Dendritic cell treated with granulocyte-macrophage colony-stimulating factor and Interleukin-4, amounts not matched to agents 40 ng/mL and 50 ng/mL, for 4 days (primary cell): ENCODE measurements at regions of chr3 and their contacts with region 1.

Region 1: DNA sequence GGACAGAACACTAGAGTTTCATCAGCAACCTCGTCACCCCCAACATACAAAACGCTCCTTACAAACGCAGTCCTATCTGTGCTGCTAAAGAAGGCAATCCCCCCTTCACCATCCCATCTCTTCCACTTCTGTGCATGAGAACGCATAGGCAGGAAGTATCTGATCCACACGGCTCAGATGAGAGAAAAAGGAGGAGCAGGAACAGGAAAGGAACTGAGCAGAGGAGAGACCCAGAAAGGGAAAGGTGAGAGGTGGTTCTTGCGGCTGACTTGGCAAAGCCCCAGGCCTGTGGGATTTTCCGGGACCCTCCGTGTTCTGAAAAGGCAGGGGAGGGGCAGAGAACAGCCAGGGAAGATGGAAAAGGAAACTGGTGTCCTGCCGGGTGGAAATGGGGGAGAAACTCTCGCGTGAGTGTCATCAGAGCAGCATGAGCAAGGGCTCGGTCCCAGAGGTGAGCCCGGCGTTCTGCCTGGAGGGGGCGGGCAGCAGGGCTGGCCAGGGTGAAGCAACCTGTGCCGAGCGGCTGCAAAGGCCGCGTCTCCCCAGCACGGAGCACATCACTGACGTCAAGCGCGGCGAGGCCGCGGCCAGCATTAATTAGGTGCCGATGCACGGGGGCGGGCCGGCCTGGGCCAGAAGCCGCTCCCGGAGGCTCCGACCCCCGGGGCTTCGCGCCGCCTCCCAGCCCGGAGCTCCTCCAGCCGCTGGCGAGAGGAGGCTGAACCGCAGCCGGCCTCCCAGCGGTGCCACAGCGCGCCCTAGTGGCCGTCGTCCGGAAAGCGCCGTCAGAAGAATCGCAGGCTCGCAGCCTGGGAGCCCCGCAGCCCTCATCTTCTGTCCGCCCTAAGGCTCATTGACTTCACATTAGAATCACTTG is 35.8 kb downstream of the CPN2 start:
- H3K4me3 Mint-ChIP-seq: peak overlapping the region; percentile 74
- H3K27ac Mint-ChIP-seq: peak overlapping the region; percentile 3
- H3K4me1 Mint-ChIP-seq: peaks cover 8% of the 10 kb centered on the region
- H3K27me3 Mint-ChIP-seq: peaks cover 80% of the 10 kb centered on the region

Region 2: GRCh38 chr3:193665370-193665989 is 649.8 kb before region 1 on chr3:
- intact Hi-C with region 1: loop called (anchors 1 kb)
- H3K4me3 Mint-ChIP-seq: no peak overlapping the region
- H3K27ac Mint-ChIP-seq: no peak overlapping the region
- H3K4me1 Mint-ChIP-seq: no peaks in the 10 kb centered on the region
- H3K27me3 Mint-ChIP-seq: no peaks in the 10 kb centered on the region

Region 3: DNA sequence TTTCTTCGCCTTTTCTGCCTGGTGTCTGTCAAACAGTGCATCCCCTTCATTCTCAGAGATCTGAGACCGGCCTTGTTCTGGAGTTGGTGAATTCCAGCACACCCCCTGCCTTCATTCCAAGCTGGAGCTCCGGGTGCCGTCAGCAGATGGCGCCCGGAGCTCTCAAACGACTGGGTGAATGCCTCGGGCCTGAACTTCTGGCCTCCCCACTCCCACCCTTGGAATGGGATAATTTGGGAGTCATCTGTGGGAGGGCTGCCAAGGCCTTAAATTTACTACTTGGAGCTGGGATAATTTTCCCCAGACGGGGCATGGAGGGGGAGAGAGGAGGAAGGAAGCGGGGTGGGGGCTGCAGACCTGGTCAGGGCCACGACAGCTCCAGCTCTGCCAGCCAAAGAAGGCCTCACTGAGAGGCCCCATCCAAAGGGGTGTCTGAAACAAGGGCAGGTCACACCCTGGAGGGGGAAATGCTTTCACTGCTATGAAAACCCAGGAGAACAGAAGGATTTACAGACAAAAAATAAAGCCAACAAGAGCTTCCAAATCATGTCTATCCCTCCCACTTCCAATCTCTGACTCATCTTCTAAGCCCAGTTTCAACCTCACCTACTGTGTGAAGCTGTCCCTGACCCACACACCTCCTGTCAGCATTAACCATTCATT is 534.4 kb before region 1 on chr3:
- intact Hi-C with region 1: loop called (anchors 1 kb)
- H3K4me3 Mint-ChIP-seq: no peak overlapping the region
- H3K27ac Mint-ChIP-seq: no peak overlapping the region
- H3K4me1 Mint-ChIP-seq: no peaks in the 10 kb centered on the region
- H3K27me3 Mint-ChIP-seq: peaks cover 53% of the 10 kb centered on the region

Region 4: GRCh38 chr3:193788189-193788991 is 526.9 kb before region 1 on chr3:
- intact Hi-C with region 1: loop called (anchors 2 kb)
- H3K4me3 Mint-ChIP-seq: no peak overlapping the region
- H3K27ac Mint-ChIP-seq: no peak overlapping the region
- H3K4me1 Mint-ChIP-seq: peaks cover 5% of the 10 kb centered on the region
- H3K27me3 Mint-ChIP-seq: peaks cover 54% of the 10 kb centered on the region

Region 5: DNA sequence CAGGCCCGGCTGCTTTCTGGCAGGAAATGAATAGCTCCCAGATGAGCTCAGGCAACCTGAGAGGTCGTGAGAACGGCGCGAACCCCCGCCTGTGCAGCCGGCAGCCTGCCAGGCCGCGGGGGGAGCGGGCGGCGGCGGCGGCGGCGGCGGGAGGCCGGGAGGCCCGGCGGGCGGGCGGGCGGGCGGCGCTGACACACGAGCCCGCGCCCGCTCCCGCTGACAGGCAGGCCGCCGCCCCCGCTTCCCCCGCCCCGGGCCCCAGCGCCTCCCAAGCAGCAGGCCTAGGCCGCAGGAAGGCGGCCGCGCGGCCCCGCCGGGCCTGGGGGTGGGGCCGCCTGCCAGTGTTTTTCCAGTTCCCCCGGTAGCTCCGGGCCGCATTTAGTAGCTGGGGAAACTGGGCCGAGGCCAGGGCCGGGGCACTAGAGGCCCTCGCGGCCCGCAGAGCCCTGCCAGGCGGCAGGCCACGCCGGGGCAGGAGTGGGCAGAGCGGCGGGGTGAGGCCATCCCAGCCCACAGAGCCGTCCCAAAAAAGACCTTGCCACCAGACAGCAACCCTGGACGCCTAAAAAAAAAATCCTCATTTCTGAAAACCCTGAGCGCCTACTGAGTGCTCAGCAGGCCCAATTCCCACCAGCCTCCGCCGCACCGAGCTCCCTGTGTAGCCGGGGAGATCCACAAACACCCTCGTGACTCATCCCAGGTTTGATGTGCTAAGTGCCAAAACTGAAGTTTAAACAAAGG is 173.7 kb before region 1 on chr3:
- intact Hi-C with region 1: loop called (anchors 10 kb)
- H3K4me3 Mint-ChIP-seq: peak overlapping the region; percentile 57
- H3K27ac Mint-ChIP-seq: no peak overlapping the region
- H3K4me1 Mint-ChIP-seq: peaks cover 24% of the 10 kb centered on the region
- H3K27me3 Mint-ChIP-seq: peaks cover 80% of the 10 kb centered on the region

Region 6: GRCh38 chr3:194265483-194265892 is 49.8 kb before region 1 on chr3:
- intact Hi-C with region 1: no loop called
- H3K4me3 Mint-ChIP-seq: peak overlapping the region; percentile 39
- H3K27ac Mint-ChIP-seq: no peak overlapping the region
- H3K4me1 Mint-ChIP-seq: peaks cover 21% of the 10 kb centered on the region
- H3K27me3 Mint-ChIP-seq: peaks cover 30% of the 10 kb centered on the region